ENCODE measurements at regions of chr18 and their contacts with region 1.

Region 1: DNA sequence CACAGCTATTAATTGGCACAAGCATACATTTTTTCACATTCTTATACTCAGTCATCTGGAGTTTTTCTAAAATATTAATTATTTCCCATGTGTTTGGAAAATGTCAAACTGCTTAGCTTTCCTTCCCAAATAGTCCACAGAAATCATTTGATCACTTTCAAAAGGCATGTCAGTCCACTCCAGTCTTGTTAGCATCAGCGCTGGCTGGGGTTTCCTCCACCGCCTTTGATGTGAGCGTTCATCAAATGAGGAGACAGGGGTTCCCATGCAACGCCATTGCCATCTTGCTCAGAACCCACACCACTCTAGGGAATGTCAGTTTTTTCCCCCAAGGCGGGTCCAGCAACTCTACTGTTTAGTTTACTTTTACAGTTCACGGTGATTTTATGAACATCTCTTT is 13.1 kb upstream of the RAX start:
- DNase-seq: no peak
- H3K4me3 ChIP-seq: no peak overlapping the region
- H3K27ac ChIP-seq: no peak overlapping the region
- H3K4me1 ChIP-seq: no peaks in the 10 kb centered on the region
- H3K27me3 ChIP-seq: no peaks in the 10 kb centered on the region
- CTCF ChIP-seq: no peak

Region 2: GRCh38 chr18:59358712-59359575 is 72.6 kb after region 1 on chr18 and contains the start of gene LMAN1:
- CTCF ChIA-PET with region 1: no interaction called
- POLR2A ChIA-PET with region 1: interaction called, 14 read pairs
- intact Hi-C with region 1: no loop called
- DNase-seq: peak; percentile 80 to 91
- H3K4me3 ChIP-seq: peak within 1 kb of the TSS; percentile 95
- H3K27ac ChIP-seq: peak within 1 kb of the TSS; percentile 91
- H3K4me1 ChIP-seq: peaks cover 24% of the 10 kb centered on the region
- H3K27me3 ChIP-seq: no peaks in the 10 kb centered on the region
- CTCF ChIP-seq: no peak
- total RNA-seq, gene LMAN1: 77.3 and 78.3 TPM in 2 replicates

Region 3: DNA sequence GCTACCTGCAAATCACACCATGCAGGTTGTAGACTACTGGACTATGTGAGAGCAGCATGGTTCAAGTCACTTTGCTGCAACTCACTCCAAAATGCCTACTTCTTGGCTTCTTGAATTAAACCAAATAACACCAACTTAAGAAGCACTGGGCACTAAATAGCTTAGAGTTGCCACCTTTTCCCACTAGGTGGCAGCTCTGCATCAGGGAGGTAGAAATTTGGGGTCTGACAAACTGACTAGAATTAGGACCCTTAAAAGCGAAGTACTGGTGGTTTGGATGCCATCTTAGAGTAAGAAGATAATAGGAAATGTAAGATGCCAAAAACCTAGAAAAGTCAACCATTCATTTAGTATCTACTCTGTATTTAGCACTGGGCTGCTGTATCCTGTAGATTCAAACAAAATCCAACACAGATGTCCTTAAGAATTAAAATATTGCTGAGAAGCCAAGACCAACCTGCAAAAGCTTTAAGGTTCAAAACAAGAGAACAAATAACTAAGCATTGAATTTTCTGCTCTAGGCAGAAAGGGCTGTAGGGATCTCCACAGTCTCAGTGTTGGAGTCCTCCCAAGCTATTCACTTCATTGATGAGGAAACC is 345.3 kb after region 1 on chr18:
- CTCF ChIA-PET with region 1: no interaction called
- POLR2A ChIA-PET with region 1: interaction called, 14 read pairs
- intact Hi-C with region 1: no loop called
- DNase-seq: no peak
- H3K4me3 ChIP-seq: no peak overlapping the region
- H3K27ac ChIP-seq: no peak overlapping the region
- H3K4me1 ChIP-seq: no peaks in the 10 kb centered on the region
- H3K27me3 ChIP-seq: no peaks in the 10 kb centered on the region
- CTCF ChIP-seq: peak; percentile 87